Mammary epithelial cell (primary cell): ENCODE measurements at regions of chr1 and their contacts with region 1.

Region 1: GRCh38 chr1:53182111-53182593 is 14.5 kb upstream of the CPT2 start:
- DNase-seq: peak; percentile 51
- H3K4me3 ChIP-seq: no peak overlapping the region
- H3K27ac ChIP-seq: no peak overlapping the region
- H3K4me1 ChIP-seq: no peaks in the 10 kb centered on the region
- H3K27me3 ChIP-seq: no peaks in the 10 kb centered on the region
- CTCF ChIP-seq: peak; percentile 86 to 91

Region 2: GRCh38 chr1:52825868-52826267 is 356.3 kb before region 1 on chr1:
- CTCF ChIA-PET with region 1: interaction called, 4 read pairs
- dilution Hi-C with region 1: no loop called
- in situ Hi-C with region 1: no loop called
- intact Hi-C with region 1: loop called (anchors 5 kb)
- DNase-seq: no peak
- H3K4me3 ChIP-seq: no peak overlapping the region
- H3K27ac ChIP-seq: no peak overlapping the region
- H3K4me1 ChIP-seq: no peaks in the 10 kb centered on the region
- H3K27me3 ChIP-seq: no peaks in the 10 kb centered on the region
- CTCF ChIP-seq: peak; percentile 34 to 35

Region 3: GRCh38 chr1:52904927-52905698 is 277.0 kb before region 1 on chr1:
- CTCF ChIA-PET with region 1: no interaction called
- dilution Hi-C with region 1: no loop called
- in situ Hi-C with region 1: loop called in 1 of 2 experiments (anchors 25 kb)
- intact Hi-C with region 1: loop called (anchors 1 kb)
- DNase-seq: no peak
- H3K4me3 ChIP-seq: no peak overlapping the region
- H3K27ac ChIP-seq: no peak overlapping the region
- H3K4me1 ChIP-seq: no peaks in the 10 kb centered on the region
- H3K27me3 ChIP-seq: no peaks in the 10 kb centered on the region
- CTCF ChIP-seq: peak; percentile 25 to 48

Region 4: DNA sequence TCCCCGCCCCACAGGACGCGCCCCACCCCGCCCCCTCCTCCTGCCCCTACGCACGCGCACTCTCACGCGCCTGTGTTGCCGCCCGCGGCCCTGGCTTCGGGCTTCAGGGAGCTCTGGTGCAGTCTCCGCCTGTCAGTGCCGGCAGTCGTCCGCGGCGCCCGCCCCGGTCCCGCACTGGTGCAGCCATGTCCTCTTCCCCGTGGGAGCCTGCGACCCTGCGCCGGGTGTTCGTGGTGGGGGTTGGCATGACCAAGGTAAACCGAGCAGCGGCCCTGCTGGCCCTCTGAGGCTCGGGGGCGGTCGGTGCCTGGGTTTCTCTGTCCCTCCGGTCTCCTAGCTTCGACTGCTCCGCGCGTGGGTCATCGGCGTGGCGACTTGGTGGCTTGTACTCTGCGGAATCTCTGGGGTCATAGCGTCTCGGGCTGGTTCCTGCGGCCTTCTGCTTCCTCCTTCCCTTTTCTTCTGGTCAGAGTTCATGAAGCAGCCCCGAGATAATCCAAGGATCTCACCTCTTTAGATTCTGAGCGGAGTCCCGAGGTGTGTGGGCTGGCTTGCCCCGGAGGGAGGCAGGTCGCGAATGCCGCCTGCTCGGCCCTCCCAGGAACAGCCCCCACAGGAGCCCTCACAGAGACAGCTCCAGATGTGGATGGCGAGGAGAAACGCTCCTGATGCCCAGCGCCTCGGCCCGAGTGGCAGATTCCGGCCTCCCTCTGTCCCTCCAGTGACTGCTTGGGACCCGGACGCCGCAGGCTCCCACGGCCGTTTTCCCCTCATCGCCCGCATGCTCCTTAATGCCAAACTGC is 254.7 kb before region 1 on chr1 and contains the start of gene SCP2:
- CTCF ChIA-PET with region 1: no interaction called
- dilution Hi-C with region 1: no loop called
- in situ Hi-C with region 1: loop called (anchors 25 kb)
- intact Hi-C with region 1: loop called (anchors 5 kb)
- DNase-seq: peak; percentile 65
- H3K4me3 ChIP-seq: peak within 1 kb of the TSS; percentile 82 to 87 (median 85)
- H3K27ac ChIP-seq: peak within 1 kb of the TSS; percentile 47
- H3K4me1 ChIP-seq: peaks cover 3% of the 10 kb centered on the region
- H3K27me3 ChIP-seq: no peaks in the 10 kb centered on the region
- CTCF ChIP-seq: no peak
- total RNA-seq, gene SCP2: 80.0 to 105 TPM

Region 5: GRCh38 chr1:53014791-53015507 is 167.2 kb before region 1 on chr1:
- CTCF ChIA-PET with region 1: no interaction called
- dilution Hi-C with region 1: no loop called
- in situ Hi-C with region 1: no loop called
- intact Hi-C with region 1: loop called (anchors 5 kb)
- DNase-seq: peak; percentile 90
- H3K4me3 ChIP-seq: peak overlapping the region; percentile 58 to 91 (median 86)
- H3K27ac ChIP-seq: peak overlapping the region; percentile 71
- H3K4me1 ChIP-seq: no peaks in the 10 kb centered on the region
- H3K27me3 ChIP-seq: no peaks in the 10 kb centered on the region
- CTCF ChIP-seq: no peak